Panc1 (cell line): ENCODE measurements at regions of chr6 and their contacts with region 1.

Region 1: DNA sequence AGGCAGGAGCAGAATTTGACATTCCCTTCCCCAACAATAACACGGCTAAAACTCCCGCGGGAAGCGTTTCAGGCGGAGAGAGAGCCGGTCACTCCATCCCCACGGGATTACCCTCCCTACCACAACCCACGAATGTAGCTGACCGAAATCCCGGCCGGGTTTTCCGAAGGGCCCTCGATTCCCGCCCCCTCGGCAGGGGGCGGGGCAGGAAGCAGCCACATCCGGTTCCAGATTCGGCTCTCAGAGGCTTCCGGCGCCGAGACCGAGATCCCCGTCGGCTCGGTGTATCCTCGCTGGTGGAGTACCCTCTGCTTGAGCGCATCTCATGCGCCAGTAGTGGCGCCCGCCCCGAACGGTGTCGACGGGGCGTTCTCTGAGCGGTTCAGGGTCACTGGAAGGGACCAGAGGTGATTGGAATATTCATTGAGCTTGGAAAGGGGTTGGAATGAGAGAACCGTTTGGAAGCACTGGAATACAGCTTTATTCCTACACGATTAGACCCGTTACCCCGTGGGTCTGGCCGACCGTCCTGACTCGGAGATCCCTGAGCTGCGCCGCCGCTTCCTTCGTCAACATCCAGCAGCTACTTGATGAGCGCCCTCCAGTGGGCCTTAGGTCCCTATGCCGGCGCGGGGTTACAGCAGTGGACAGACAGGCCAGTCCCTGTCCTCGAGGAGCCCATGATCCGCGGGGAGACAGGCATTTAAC is 649 bp upstream of the RGL2 start:
- DNase-seq: no peak
- ATAC-seq: peak; percentile 81
- H3K4me3 ChIP-seq: peak overlapping the region; percentile 72 to 80
- H3K27ac ChIP-seq: peak overlapping the region; percentile 97
- H3K4me1 ChIP-seq: peaks cover 13% of the 10 kb centered on the region
- H3K27me3 ChIP-seq: no peaks in the 10 kb centered on the region
- CTCF ChIP-seq: peak; percentile 91

Region 2: DNA sequence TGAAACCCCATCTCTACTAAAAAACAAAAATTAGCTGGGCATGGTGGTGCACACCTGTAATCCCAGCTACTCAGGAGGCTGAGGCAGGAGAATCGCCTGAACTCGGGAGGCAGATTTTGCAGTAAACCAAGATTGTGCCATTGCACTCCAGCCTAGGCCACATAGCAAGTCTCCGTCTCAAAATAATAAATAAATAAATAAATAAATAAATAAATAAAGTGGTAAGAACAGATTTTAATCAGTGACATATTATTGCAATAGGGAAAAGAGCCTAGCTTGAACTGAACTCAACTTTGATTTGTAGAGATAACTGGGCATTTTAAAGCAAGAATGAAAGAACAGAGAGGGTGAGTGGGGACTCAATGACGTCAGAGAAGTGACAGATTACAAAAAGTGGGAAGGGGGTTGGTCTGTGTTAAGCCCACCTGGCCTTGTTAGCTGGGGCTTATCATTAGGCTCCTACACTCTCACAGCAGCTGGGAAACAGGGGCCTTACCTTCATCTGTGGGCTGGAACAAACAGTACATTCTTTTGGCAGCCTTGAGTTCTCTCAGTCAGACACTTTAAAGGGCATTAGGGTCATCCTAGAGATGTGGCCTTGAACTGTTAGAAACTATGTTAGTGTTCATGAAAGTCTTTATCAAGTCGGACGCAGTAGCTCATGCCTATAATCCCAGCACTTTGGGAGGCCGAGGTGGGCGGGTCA is 67.8 kb after region 1 on chr6:
- CTCF ChIA-PET with region 1: no interaction called
- POLR2A ChIA-PET with region 1: interaction called, 11 read pairs
- in situ Hi-C with region 1: no loop called
- intact Hi-C with region 1: no loop called
- DNase-seq: no peak
- ATAC-seq: no peak
- H3K4me3 ChIP-seq: no peak overlapping the region
- H3K27ac ChIP-seq: no peak overlapping the region
- H3K4me1 ChIP-seq: no peaks in the 10 kb centered on the region
- H3K27me3 ChIP-seq: no peaks in the 10 kb centered on the region
- CTCF ChIP-seq: no peak